ENCODE measurements at regions of chr17 and their contacts with region 1.

Region 1: DNA sequence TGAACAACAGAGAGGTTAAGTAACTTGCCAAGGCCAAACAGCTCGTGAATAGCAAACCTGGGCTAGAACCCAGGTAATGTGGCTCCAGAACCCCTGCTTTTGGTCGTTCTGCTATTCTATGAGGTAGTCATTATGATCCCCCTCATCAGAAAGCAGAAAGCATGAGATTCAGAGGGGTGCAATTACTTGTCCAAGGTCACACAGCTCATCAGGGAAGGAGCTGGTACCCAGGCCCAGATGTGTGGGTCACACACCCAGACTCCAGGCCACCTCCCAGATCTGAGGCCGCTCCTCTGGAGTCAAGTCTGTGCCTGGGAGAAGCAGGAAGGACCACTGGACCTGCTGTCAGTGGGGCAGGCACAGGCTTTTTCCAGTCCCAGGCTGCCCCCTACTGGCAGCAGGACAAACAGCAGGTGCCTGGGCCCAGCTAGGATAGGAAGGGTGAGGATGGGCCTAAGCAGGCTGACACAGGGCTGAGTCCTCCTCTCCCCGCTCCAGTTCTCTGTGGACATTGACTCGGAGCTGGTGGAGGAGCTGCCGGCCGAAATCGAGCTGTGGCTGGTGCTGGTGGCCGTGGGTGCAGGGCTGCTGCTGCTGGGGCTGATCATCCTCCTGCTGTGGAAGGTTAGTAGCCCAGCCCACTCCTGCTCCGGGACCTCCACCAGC is 7.8 kb upstream of the PDK2 start:
- H3K4me3 ChIP-seq: no peak overlapping the region
- H3K27ac ChIP-seq: no peak overlapping the region
- H3K4me1 ChIP-seq: no peaks in the 10 kb centered on the region
- CTCF ChIP-seq: peak; percentile 91

Region 2: GRCh38 chr17:49763735-49764558 is 323.4 kb before region 1 on chr17 and contains the start of gene FAM117A:
- CTCF ChIA-PET with region 1: no interaction called
- POLR2A ChIA-PET with region 1: no interaction called
- H3K4me3 ChIP-seq: peak within 1 kb of the TSS; percentile 73
- H3K27ac ChIP-seq: no peak within 1 kb of the TSS
- H3K4me1 ChIP-seq: peaks cover 9% of the 10 kb centered on the region; the same call in 1 of the 2 replicates
- CTCF ChIP-seq: no peak

Region 3: DNA sequence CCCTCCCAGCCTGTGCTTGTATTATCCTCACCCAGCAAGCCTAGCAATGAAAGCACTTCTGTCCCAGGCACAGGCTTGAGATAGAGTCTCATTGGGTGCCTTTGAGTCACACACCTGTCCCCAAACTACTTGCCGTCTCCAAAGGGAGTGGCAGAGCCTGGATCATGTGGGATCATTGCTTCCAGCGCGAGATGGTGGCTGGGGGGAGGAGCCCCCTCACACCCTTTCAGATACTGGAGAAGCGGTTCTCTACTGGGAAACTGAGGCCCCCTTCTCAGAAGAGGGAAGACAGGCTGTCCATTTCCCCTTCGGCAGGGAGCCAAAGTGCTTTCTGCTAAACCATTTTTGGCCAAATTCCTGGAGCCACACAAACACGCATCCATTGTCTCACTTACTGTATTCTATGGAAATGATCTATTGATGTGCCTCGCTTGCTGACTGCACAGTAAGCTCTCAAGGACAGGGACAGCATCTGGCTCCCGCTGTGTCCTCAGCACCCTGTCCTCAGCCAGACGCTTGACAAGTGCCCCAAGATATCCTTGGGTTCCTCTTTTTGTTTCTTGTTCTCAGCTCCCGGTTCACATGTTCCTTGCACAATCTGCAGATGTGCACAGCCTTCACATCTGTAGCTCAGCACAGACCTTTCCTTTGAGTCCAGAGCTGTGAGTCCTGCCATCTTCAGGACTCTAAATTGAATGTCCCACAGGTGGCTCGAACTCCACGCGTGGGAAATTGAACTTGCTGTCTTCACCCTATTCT is 66.4 kb before region 1 on chr17:
- CTCF ChIA-PET with region 1: interaction called, 171 read pairs
- POLR2A ChIA-PET with region 1: no interaction called
- H3K4me3 ChIP-seq: no peak overlapping the region
- H3K27ac ChIP-seq: no peak overlapping the region
- H3K4me1 ChIP-seq: no peaks in the 10 kb centered on the region
- CTCF ChIP-seq: no peak

Region 4: DNA sequence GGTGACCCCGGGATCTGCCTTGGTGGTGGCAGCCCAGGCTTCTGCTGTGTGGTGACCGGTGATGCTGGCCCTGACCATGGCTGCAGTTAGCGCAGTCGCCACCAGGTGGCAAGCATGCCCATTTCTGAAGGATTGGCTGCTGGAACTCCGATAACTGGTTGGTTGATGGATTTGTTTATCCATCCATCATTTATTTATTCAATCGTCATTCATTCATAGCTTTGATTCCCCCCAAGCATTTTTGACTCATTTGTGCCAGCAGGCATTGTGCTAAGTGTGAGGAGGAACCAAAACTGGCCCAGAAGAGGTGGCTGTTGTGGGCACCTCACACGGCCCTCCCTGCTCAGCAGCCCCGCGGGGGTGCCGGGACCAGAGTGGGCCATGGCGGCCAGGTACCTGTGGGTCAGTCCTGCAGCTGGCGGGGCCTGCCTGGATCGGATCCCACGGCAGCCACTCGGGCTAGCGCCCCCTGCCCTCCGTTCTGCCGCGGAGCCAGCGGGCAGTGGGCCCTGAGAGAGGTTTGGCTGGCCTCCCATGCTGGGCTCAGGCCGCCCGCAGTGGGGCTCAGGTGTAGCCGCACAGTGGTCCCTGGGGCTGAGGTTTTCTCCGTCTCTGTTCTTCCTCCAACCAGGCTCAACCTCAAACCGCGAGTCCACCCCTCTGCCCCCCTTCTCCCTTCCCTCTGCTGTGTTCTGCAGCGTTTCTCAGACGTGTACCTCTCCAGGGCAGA is 60.3 kb before region 1 on chr17:
- CTCF ChIA-PET with region 1: interaction called, 171 read pairs
- POLR2A ChIA-PET with region 1: no interaction called
- H3K4me3 ChIP-seq: peak overlapping the region; percentile 11
- H3K27ac ChIP-seq: no peak overlapping the region
- H3K4me1 ChIP-seq: no peaks in the 10 kb centered on the region
- CTCF ChIP-seq: peak; percentile 53

Region 5: GRCh38 chr17:50037321-50038071 is 49.9 kb before region 1 on chr17:
- CTCF ChIA-PET with region 1: interaction called, 171 read pairs
- POLR2A ChIA-PET with region 1: no interaction called
- H3K4me3 ChIP-seq: no peak overlapping the region
- H3K27ac ChIP-seq: no peak overlapping the region
- H3K4me1 ChIP-seq: no peaks in the 10 kb centered on the region
- CTCF ChIP-seq: no peak

Region 6: GRCh38 chr17:50055426-50056230 is 31.8 kb before region 1 on chr17 and contains the start of gene ITGA3:
- CTCF ChIA-PET with region 1: interaction called, 18 read pairs
- POLR2A ChIA-PET with region 1: interaction called, 6 read pairs
- H3K4me3 ChIP-seq: peak within 1 kb of the TSS; percentile 64
- H3K27ac ChIP-seq: peak within 1 kb of the TSS; percentile 75
- H3K4me1 ChIP-seq: peaks cover 16% of the 10 kb centered on the region
- CTCF ChIP-seq: no peak

Region 7: GRCh38 chr17:50064258-50065001 is 22.9 kb before region 1 on chr17:
- CTCF ChIA-PET with region 1: interaction called, 20 read pairs
- POLR2A ChIA-PET with region 1: no interaction called
- H3K4me3 ChIP-seq: no peak overlapping the region
- H3K27ac ChIP-seq: no peak overlapping the region
- H3K4me1 ChIP-seq: peaks cover 5% of the 10 kb centered on the region
- CTCF ChIP-seq: no peak

Region 8: GRCh38 chr17:50072925-50073324 is 14.5 kb before region 1 on chr17:
- CTCF ChIA-PET with region 1: interaction called, 20 read pairs
- POLR2A ChIA-PET with region 1: no interaction called
- H3K4me3 ChIP-seq: no peak overlapping the region
- H3K27ac ChIP-seq: no peak overlapping the region
- H3K4me1 ChIP-seq: no peaks in the 10 kb centered on the region
- CTCF ChIP-seq: no peak

Region 9: GRCh38 chr17:50370052-50370451 is 282.7 kb after region 1 on chr17:
- CTCF ChIA-PET with region 1: no interaction called
- POLR2A ChIA-PET with region 1: no interaction called
- H3K4me3 ChIP-seq: no peak overlapping the region
- H3K27ac ChIP-seq: no peak overlapping the region
- H3K4me1 ChIP-seq: peaks cover 8% of the 10 kb centered on the region
- CTCF ChIP-seq: no peak

Measured in HEK293 (cell line).